ENCODE measurements at regions of chr17 and their contacts with region 1.

Region 1: DNA sequence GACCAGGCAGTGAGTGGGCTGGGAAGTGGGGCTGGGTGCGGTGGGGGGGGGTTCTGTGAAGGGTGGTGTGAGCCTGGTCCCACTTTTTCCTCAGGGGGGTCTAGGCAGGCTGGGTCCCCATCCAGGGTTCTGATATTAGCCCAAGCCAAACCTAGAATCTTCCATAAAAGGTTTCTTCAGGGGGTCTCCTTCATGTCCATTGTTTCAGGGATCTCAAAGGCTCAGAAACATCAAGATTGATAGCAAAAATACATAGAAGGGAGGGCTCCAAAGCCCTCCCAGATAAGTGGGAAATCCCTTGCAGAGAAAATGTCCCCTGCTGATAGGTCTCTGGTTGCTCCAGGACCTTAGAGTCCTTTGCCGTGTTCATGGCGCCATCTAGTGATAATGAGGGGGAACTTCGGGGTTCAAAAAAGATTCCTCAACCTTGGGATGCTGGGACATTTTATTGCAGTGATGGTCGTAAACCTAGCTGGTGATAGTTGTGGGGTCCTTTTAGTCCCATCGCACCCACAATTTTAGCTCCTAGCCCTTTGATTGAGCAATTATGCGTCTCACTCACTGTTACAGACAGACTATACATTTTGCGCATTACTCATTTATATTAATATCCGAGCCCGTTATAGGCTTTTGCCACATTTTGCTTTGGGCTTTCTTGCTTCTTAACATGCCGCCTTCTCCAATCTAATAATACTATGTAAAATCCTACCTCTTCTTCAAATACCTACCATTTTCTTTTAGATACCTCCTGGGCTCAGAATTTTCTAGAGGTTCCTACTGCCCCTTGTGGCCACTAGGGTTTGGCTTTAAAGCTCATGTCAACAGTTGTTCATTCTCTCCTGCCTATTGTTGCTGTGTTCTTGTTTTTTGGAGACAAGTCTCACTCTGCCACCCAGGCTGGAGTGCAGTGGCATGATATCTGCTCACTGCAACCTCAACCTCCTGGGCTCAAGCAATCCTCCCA is 35.1 kb downstream of the IGF2BP1 start:
- DNase-seq: peak; percentile 72 to 84 (median 81)
- H3K4me3 ChIP-seq: no peak overlapping the region
- H3K27ac ChIP-seq: no peak overlapping the region
- H3K4me1 ChIP-seq: no peaks in the 10 kb centered on the region
- H3K27me3 ChIP-seq: peaks cover 0 to 6% (median 0%) of the 10 kb centered on the region in 5 experiments

Region 2: DNA sequence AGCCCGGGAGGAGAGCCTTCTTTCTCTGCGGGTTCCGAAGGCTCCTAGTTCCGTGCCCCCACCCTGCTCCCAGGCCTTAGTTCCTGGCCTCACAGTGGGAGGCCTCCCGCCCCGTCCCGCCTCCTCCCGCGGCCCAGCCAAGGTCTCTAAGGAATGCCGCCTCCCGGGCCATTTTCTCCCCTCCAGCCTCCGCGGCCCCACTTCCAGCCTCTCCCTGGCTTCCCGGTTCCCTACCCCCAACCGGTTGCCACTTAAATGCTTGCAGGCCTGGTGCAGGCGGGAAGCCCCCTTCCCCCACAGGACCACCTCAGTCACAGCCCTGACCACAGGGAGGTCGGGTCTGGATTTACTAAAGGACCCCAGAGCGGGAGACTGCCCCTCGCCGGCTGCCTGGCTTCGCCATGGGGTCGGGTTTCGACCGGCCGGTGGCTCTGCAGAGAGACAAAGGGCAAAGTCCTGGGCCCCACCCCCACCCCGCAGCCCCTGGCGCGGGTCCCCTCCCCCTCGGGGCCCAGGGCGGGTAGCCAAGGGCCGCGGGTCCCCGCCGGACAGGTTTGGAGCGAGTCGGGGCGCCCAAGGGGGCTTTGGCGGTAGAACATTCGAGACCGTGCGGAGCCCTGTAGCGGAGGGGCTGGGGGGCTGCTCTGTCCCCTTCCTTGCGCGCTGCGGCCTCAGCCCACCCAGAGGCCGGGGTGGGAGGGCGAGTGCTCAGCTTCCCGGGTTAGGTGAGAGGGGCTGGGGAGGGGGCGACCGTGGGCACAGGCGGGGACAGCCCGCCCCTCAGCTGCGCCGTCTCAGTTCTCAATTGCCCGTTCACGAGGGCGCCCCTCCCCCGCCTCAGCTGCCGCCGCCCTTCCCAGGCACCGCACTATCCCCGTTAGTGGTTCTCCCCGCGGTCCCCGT is 18.7 kb before region 1 on chr17:
- CTCF ChIA-PET with region 1: interaction called, 16 read pairs
- POLR2A ChIA-PET with region 1: no interaction called
- DNase-seq: no peak
- H3K4me3 ChIP-seq: no peak overlapping the region
- H3K27ac ChIP-seq: no peak overlapping the region
- H3K4me1 ChIP-seq: peaks cover 0 to 8% (median 1%) of the 10 kb centered on the region in 4 experiments
- H3K27me3 ChIP-seq: peaks cover 0 to 78% (median 23%) of the 10 kb centered on the region in 5 experiments

Region 3: GRCh38 chr17:49045376-49045775 is 13.1 kb after region 1 on chr17:
- CTCF ChIA-PET with region 1: interaction called, 14 read pairs
- POLR2A ChIA-PET with region 1: no interaction called
- DNase-seq: no peak
- H3K4me3 ChIP-seq: no peak overlapping the region
- H3K27ac ChIP-seq: no peak overlapping the region
- H3K4me1 ChIP-seq: no peaks in the 10 kb centered on the region
- H3K27me3 ChIP-seq: peaks cover 0 to 9% (median 0%) of the 10 kb centered on the region in 5 experiments

Region 4: GRCh38 chr17:49108318-49108717 is 76.1 kb after region 1 on chr17:
- CTCF ChIA-PET with region 1: no interaction called
- POLR2A ChIA-PET with region 1: no interaction called
- DNase-seq: no peak
- H3K4me3 ChIP-seq: no peak overlapping the region
- H3K27ac ChIP-seq: no peak overlapping the region
- H3K4me1 ChIP-seq: no peaks in the 10 kb centered on the region
- H3K27me3 ChIP-seq: peaks cover 0 to 13% (median 0%) of the 10 kb centered on the region in 5 experiments

Measured in common myeloid progenitor, CD34-positive (primary cell).